Activated T-helper 1 cell treated with anti-CD3 and anti-CD28 coated beads, Interleukin-12 subunit alpha, Interleukin-12 subunit beta, Interleukin-2, Interleukin-4 antibody, amounts not matched to agents 30 ng/mL and 10 ng/mL and 1 ng/mL, durations not matched to agents 14 hours and 24 hours and 36 hours (primary cell): ENCODE measurements at regions of chr2 and their contacts with region 1.

Region 1: GRCh38 chr2:61764035-61764800 is 89.6 kb downstream of the FAM161A start:
- DNase-seq: peak; percentile 96
- H3K4me3 Mint-ChIP-seq: peak overlapping the region; percentile 91
- H3K27ac Mint-ChIP-seq: peak overlapping the region; percentile 97
- H3K4me1 Mint-ChIP-seq: peaks cover 24% of the 10 kb centered on the region
- H3K27me3 Mint-ChIP-seq: no peaks in the 10 kb centered on the region

Region 2: DNA sequence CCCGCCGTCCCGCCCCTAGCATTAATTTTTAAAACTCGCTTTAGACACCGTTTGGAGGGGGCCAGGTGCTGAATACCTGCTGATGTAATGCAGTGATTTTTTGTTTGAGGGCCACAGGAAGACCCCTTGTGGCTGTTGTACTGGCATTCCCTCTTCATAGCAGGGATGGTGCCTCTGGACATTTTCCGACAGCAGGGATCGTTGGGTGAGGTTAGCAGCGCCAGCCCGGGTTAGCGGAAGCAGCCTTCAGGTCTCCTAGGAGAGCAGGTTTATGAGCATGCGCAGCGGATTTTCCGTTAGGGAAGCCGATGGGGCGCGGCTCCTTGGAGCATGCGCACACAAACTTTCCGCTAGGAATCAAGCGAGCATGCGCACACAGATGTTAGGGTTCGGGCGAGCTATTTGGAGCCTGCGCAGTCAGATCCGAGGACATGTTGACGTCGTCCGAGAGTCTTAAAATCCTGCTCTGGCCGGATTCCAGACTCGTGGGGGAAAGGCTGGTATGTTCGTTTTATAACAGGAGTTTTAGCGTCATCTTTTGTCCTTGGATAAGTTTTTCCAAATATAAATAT is 619.4 kb before region 1 on chr2:
- intact Hi-C with region 1: loop called (anchors 1 kb)
- DNase-seq: peak; percentile 92
- H3K4me3 Mint-ChIP-seq: peak overlapping the region; percentile 94
- H3K27ac Mint-ChIP-seq: peak overlapping the region; percentile 94
- H3K4me1 Mint-ChIP-seq: peaks cover 5% of the 10 kb centered on the region
- H3K27me3 Mint-ChIP-seq: no peaks in the 10 kb centered on the region

Region 3: GRCh38 chr2:61470965-61471904 is 293.0 kb before region 1 on chr2 and contains the start of gene USP34:
- intact Hi-C with region 1: loop called (anchors 1 kb)
- DNase-seq: peak; percentile 88
- H3K4me3 Mint-ChIP-seq: peak within 1 kb of the TSS; percentile 95
- H3K27ac Mint-ChIP-seq: peak within 1 kb of the TSS; percentile 94
- H3K4me1 Mint-ChIP-seq: peaks cover 28% of the 10 kb centered on the region
- H3K27me3 Mint-ChIP-seq: no peaks in the 10 kb centered on the region
- total RNA-seq, gene USP34: 91.3 and 98.1 TPM in 2 replicates

Region 4: GRCh38 chr2:61694312-61695274 is 69.6 kb before region 1 on chr2:
- intact Hi-C with region 1: loop called (anchors 1 kb)
- DNase-seq: peak; percentile 80
- H3K4me3 Mint-ChIP-seq: peak overlapping the region; percentile 89
- H3K27ac Mint-ChIP-seq: peak overlapping the region; percentile 76
- H3K4me1 Mint-ChIP-seq: peaks cover 14% of the 10 kb centered on the region
- H3K27me3 Mint-ChIP-seq: peaks cover 2% of the 10 kb centered on the region

Region 5: GRCh38 chr2:61713457-61713856 is 50.8 kb before region 1 on chr2:
- intact Hi-C with region 1: no loop called
- DNase-seq: no peak
- H3K4me3 Mint-ChIP-seq: no peak overlapping the region
- H3K27ac Mint-ChIP-seq: no peak overlapping the region
- H3K4me1 Mint-ChIP-seq: peaks cover 1% of the 10 kb centered on the region
- H3K27me3 Mint-ChIP-seq: no peaks in the 10 kb centered on the region

Region 6: DNA sequence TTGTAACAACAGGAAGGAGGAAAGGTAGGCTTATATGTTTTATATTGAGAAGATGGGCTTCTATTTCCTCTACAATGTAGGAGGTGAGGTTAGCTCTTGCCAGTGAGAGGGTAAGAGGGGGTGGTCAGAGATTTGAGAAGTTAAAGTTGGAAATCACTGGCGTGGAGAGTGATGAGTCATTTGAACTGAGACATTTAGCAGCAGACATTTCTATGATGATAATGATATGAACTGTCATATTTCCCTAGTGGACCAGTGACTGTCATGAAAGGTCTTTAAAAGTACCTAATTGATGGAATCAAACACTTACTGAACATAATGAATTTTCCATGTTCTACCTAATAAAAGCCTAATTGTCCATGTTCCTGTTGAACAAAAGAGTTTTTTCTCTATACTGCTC is 36.5 kb before region 1 on chr2:
- intact Hi-C with region 1: no loop called
- DNase-seq: no peak
- H3K4me3 Mint-ChIP-seq: no peak overlapping the region
- H3K27ac Mint-ChIP-seq: no peak overlapping the region
- H3K4me1 Mint-ChIP-seq: peaks cover 6% of the 10 kb centered on the region
- H3K27me3 Mint-ChIP-seq: peaks cover 19% of the 10 kb centered on the region

Region 7: GRCh38 chr2:62195421-62196277 is 431.4 kb after region 1 on chr2 and contains the start of gene B3GNT2:
- intact Hi-C with region 1: loop called (anchors 5 kb)
- DNase-seq: peak; percentile 75
- H3K4me3 Mint-ChIP-seq: peak within 1 kb of the TSS; percentile 87
- H3K27ac Mint-ChIP-seq: peak within 1 kb of the TSS; percentile 89
- H3K4me1 Mint-ChIP-seq: peaks cover 36% of the 10 kb centered on the region
- H3K27me3 Mint-ChIP-seq: no peaks in the 10 kb centered on the region
- total RNA-seq, gene B3GNT2: 32.8 and 37.3 TPM in 2 replicates